Activated CD4-positive, alpha-beta T cell treated with anti-CD3 and anti-CD28 coated beads, Interleukin-2, amount 10 ng/mL, durations not matched to agents 24 days and 14 days (primary cell): ENCODE measurements at regions of chr1 and their contacts with region 1.

Region 1: DNA sequence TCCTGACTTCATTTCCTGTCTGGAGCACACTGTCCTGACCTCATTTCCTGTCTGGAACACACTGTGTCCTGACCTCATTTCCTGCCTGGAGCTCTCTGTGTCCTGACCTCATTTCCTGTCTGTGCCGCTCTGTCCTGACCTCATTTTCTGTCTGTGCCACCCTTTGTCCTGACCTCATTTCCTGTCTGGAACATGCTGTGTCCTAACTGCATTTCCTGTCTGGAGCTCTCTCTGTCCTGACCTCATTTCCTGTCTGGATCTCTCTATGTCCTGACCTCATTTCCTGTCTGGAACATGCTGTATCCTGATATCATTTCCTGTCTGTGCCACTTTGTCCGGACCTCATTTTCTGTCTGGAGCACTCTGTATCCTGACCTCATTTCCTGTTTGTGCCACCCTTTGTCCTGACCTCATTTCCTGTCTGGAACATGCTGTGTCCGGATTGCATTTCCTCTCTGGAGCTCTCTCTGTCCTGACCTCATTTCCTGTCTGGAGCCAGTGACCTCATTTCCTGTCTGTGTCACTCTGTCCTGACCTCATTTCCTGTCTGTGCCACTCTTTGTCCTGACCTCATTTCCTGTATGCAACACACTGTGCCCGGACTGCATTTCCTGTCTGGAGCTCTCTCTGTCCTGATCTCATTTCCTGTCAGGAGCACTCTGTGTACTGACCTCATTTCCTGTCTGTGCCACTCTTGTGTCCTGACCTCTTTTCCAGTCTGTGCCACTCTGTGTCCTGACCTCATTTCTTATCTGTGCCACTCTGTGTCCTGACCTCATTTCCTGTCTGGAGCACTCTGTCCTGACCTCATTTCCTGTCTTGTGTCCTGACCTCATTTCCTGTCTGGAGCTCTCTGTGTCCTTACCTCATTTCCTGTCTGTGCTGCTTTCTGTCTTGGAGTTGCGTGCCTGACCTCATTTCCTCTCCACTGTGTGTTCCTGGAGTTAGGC is 27.6 kb downstream of the SKI start:
- DNase-seq: peak; percentile 94
- H3K4me3 Mint-ChIP-seq: no peak overlapping the region
- H3K27ac Mint-ChIP-seq: no peak overlapping the region
- H3K4me1 Mint-ChIP-seq: peaks cover 33% of the 10 kb centered on the region
- H3K27me3 Mint-ChIP-seq: no peaks in the 10 kb centered on the region

Region 2: DNA sequence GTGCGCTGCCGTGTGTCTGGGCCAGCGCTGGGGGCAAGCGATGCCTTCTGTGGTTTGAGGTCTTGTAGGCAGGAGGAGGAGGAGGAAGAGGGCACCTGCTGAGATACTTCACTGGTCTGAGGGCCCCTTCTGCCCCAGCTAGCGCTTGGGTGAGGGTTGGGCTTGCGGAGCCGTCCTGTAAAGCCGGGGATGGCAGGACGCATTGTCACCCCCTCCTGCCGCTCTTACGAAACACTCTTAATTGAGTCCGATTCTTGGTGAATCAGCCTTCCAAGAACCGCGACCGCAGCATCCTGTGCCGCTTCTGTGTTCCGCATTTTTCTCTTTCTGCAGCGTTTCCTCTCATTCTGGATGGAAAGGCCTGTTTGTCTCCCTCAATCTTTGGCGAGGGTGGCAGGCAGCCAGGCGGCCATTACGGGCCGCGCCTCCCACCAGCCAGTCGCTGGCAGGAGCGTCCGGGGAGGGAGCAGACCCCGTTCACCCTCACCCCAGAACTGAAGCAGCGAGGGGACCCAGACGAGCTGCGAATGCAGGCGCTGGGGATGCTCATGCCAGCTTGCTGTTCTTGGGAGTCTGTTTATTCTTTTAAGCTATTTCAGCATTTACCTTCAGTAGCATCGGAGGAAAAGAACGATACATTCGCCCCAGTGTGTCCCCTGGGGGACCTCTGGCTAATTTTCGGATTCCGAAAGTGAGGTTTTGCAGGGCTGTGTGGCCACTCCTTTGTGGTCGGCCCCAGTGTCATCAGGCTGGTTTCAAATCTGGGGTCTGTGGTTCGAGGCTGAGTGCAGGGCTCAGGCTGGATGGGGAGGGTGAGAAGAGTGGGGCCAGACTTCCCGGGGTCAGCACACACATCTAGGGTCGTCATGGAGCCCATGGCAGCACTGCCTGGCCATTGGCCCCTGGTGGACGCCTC is 35.2 kb after region 1 on chr1:
- intact Hi-C with region 1: loop called (anchors 2 kb)
- DNase-seq: peak; percentile 94
- H3K4me3 Mint-ChIP-seq: peak overlapping the region; percentile 86
- H3K27ac Mint-ChIP-seq: peak overlapping the region; percentile 95
- H3K4me1 Mint-ChIP-seq: peaks cover 67% of the 10 kb centered on the region
- H3K27me3 Mint-ChIP-seq: no peaks in the 10 kb centered on the region